ENCODE measurements at regions of chr12 and their contacts with region 1.

Region 1: DNA sequence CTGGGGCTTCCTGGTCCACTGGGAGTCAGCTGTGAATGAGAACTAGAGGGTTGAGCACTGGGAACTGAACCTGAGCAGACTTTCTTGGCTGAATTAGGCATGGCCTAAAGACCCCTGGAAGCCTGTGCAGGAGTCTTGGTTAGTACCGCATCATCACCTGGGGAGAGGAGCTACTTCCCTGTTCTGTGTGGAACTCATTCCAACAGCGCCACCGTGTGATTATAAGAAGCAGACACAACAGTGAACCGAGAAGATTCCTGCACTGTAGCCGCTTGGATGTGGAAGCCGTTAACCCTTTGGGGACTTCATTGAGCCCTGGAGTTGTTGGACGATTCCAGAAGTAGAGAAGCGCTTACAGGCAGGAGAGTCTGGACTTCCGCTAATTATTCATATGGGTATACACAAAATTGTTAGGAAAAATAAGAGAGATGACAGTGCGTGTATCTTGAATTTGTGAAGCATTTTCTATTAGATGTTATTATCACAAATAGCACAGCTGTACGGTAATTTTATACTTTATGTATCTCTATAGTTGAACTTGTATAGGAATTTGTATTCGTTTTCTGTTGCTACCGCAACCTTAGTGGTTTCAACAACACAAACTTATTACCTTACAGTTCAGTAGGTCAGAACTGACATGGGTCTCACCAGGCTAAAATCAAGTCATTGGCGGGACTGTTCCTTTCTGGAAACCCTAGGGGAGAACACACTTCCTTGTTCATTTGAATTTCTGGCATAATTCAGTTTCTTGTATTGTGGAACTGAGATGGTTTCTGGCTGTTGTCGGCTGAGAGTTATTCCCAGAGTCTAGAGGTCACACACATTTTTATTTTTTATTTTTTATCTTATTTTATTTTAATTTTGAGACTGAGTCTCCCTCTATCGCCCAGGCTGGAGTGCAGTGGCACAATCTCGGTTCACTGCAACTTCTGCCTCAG is 100.7 kb downstream of the C2CD5 start:
- DNase-seq: peak; percentile 87
- H3K4me3 Mint-ChIP-seq: no peak overlapping the region
- H3K27ac Mint-ChIP-seq: no peak overlapping the region
- H3K4me1 Mint-ChIP-seq: no peaks in the 10 kb centered on the region
- H3K27me3 Mint-ChIP-seq: peaks cover 20% of the 10 kb centered on the region
- CTCF ChIP-seq: peak; percentile 73

Region 2: GRCh38 chr12:22088886-22089285 is 354.8 kb before region 1 on chr12:
- CTCF ChIA-PET with region 1: interaction called, 51 read pairs
- POLR2A ChIA-PET with region 1: no interaction called
- intact Hi-C with region 1: no loop called
- DNase-seq: peak; percentile 65
- H3K4me3 Mint-ChIP-seq: no peak overlapping the region
- H3K27ac Mint-ChIP-seq: no peak overlapping the region
- H3K4me1 Mint-ChIP-seq: peaks cover 7% of the 10 kb centered on the region
- H3K27me3 Mint-ChIP-seq: no peaks in the 10 kb centered on the region
- CTCF ChIP-seq: no peak

Region 3: GRCh38 chr12:22190969-22191368 is 252.7 kb before region 1 on chr12:
- CTCF ChIA-PET with region 1: no interaction called
- POLR2A ChIA-PET with region 1: no interaction called
- intact Hi-C with region 1: loop called (anchors 10 kb)
- DNase-seq: no peak
- H3K4me3 Mint-ChIP-seq: no peak overlapping the region
- H3K27ac Mint-ChIP-seq: no peak overlapping the region
- H3K4me1 Mint-ChIP-seq: no peaks in the 10 kb centered on the region
- H3K27me3 Mint-ChIP-seq: no peaks in the 10 kb centered on the region
- CTCF ChIP-seq: no peak

Region 4: GRCh38 chr12:22231836-22232235 is 211.8 kb before region 1 on chr12:
- CTCF ChIA-PET with region 1: no interaction called
- POLR2A ChIA-PET with region 1: no interaction called
- intact Hi-C with region 1: no loop called
- DNase-seq: peak; percentile 18
- H3K4me3 Mint-ChIP-seq: no peak overlapping the region
- H3K27ac Mint-ChIP-seq: no peak overlapping the region
- H3K4me1 Mint-ChIP-seq: peaks cover 36% of the 10 kb centered on the region
- H3K27me3 Mint-ChIP-seq: peaks cover 3% of the 10 kb centered on the region
- CTCF ChIP-seq: no peak

Region 5: GRCh38 chr12:22340143-22340542 is 103.5 kb before region 1 on chr12:
- CTCF ChIA-PET with region 1: interaction called, 11 read pairs
- POLR2A ChIA-PET with region 1: interaction called, 4 read pairs
- intact Hi-C with region 1: loop called (anchors 1 kb)
- DNase-seq: no peak
- H3K4me3 Mint-ChIP-seq: no peak overlapping the region
- H3K27ac Mint-ChIP-seq: no peak overlapping the region
- H3K4me1 Mint-ChIP-seq: no peaks in the 10 kb centered on the region
- H3K27me3 Mint-ChIP-seq: no peaks in the 10 kb centered on the region
- CTCF ChIP-seq: no peak

Region 6: GRCh38 chr12:22459838-22460490 is 16.3 kb after region 1 on chr12:
- CTCF ChIA-PET with region 1: interaction called, 35 read pairs
- POLR2A ChIA-PET with region 1: no interaction called
- intact Hi-C with region 1: no loop called
- DNase-seq: peak; percentile 64
- H3K4me3 Mint-ChIP-seq: no peak overlapping the region
- H3K27ac Mint-ChIP-seq: no peak overlapping the region
- H3K4me1 Mint-ChIP-seq: no peaks in the 10 kb centered on the region
- H3K27me3 Mint-ChIP-seq: no peaks in the 10 kb centered on the region
- CTCF ChIP-seq: peak; percentile 55

Region 7: GRCh38 chr12:22551624-22552023 is 108.0 kb after region 1 on chr12:
- CTCF ChIA-PET with region 1: no interaction called
- POLR2A ChIA-PET with region 1: no interaction called
- intact Hi-C with region 1: no loop called
- DNase-seq: no peak
- H3K4me3 Mint-ChIP-seq: no peak overlapping the region
- H3K27ac Mint-ChIP-seq: no peak overlapping the region
- H3K4me1 Mint-ChIP-seq: no peaks in the 10 kb centered on the region
- H3K27me3 Mint-ChIP-seq: no peaks in the 10 kb centered on the region
- CTCF ChIP-seq: no peak

Region 8: GRCh38 chr12:22624870-22625761 is 181.5 kb after region 1 on chr12 and contains the start of gene ETNK1:
- CTCF ChIA-PET with region 1: no interaction called
- POLR2A ChIA-PET with region 1: no interaction called
- intact Hi-C with region 1: no loop called
- DNase-seq: peak; percentile 89
- H3K4me3 Mint-ChIP-seq: peak within 1 kb of the TSS; percentile 100
- H3K27ac Mint-ChIP-seq: peak within 1 kb of the TSS; percentile 99
- H3K4me1 Mint-ChIP-seq: peaks cover 22% of the 10 kb centered on the region
- H3K27me3 Mint-ChIP-seq: no peaks in the 10 kb centered on the region
- CTCF ChIP-seq: no peak
- total RNA-seq, gene ETNK1: 38.2 and 38.3 TPM in 2 replicates

Measured in MCF 10A (cell line).